ENCODE measurements at regions of chr6 and their contacts with region 1.

Region 1: GRCh38 chr6:110710115-110710514 is 105.2 kb downstream of the CDK19 start:
- DNase-seq: no peak
- H3K4me3 ChIP-seq: no peak overlapping the region
- H3K27ac ChIP-seq: no peak overlapping the region
- H3K4me1 ChIP-seq: no peaks in the 10 kb centered on the region
- H3K27me3 ChIP-seq: no peaks in the 10 kb centered on the region
- CTCF ChIP-seq: no peak
- POLR2A ChIP-seq: no peak

Region 2: DNA sequence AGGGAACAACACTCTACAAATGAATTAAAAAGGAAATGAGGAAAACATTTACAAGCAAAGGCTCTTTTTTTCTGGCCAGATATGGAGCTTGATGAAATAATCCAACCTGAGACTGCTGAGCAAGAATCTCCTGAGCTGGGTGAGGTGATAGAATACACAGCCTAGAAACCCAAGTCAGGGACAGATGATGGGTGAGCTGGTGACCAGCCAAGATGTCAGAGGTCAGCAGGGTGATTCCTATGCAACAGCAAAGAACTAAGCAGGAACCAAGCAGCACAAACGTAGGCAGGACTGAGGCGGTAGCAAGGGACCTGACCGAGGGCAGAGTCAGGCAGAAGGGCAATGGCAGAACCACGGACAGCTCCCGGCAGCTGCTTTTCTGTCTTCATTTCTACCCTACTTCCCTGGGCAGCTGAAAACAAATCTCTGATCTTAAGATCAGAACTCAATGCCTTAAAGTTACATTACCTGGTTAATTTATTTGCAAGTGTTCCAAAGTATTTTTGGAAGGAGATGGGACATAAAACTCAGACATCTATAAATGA is 454.8 kb before region 1 on chr6:
- intact Hi-C with region 1: no loop called
- DNase-seq: no peak
- H3K4me3 ChIP-seq: no peak overlapping the region
- H3K27ac ChIP-seq: no peak overlapping the region
- H3K4me1 ChIP-seq: no peaks in the 10 kb centered on the region
- H3K27me3 ChIP-seq: no peaks in the 10 kb centered on the region
- CTCF ChIP-seq: no peak
- POLR2A ChIP-seq: no peak

Region 3: GRCh38 chr6:110672122-110672521 is 38.0 kb before region 1 on chr6:
- intact Hi-C with region 1: no loop called
- DNase-seq: no peak
- H3K4me3 ChIP-seq: no peak overlapping the region
- H3K27ac ChIP-seq: no peak overlapping the region
- H3K4me1 ChIP-seq: no peaks in the 10 kb centered on the region
- H3K27me3 ChIP-seq: no peaks in the 10 kb centered on the region
- CTCF ChIP-seq: no peak
- POLR2A ChIP-seq: no peak

Region 4: DNA sequence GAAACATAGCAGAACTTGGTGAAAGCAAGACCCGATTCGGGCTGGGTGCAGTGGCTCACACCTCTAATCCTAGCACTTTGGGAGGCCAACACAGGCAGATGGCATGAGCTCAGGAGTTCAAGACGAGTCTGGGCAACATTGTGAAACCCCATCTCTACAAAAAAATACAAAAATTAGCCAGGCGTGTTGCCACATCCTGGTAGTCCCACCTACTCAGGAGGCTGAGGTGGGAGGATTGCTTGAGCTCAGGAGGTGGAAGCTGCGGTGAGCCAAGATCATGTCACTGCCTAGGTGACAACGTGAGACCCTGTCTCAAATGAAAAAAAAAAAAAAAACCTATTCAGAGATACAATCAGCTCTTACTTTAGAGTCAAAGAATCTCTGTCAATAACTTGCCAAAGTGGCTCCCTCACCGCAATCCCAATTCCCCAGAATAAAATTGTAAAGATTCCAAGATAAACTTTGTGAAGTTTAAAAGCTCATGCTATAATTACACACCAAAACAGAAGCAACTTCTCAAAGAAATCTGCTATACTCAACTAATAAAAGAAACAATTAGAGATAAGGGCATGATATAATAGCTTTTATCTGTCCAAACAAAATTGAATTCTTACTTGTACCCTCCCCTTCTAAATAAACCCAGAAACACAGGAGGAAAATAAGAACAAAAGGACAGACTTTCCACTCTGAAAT is 71.6 kb after region 1 on chr6:
- intact Hi-C with region 1: loop called (anchors 2 kb)
- DNase-seq: no peak
- H3K4me3 ChIP-seq: no peak overlapping the region
- H3K27ac ChIP-seq: no peak overlapping the region
- H3K4me1 ChIP-seq: no peaks in the 10 kb centered on the region
- H3K27me3 ChIP-seq: no peaks in the 10 kb centered on the region
- CTCF ChIP-seq: no peak
- POLR2A ChIP-seq: no peak